ENCODE measurements at regions of chr5 and their contacts with region 1.

Region 1: GRCh38 chr5:119335261-119335677 is 20.6 kb upstream of the TNFAIP8 start:
- DNase-seq: no peak
- H3K27ac ChIP-seq: peak overlapping the region; percentile 63
- CTCF ChIP-seq: peak; percentile 14; the same call in 1 of the 2 replicates

Region 2: DNA sequence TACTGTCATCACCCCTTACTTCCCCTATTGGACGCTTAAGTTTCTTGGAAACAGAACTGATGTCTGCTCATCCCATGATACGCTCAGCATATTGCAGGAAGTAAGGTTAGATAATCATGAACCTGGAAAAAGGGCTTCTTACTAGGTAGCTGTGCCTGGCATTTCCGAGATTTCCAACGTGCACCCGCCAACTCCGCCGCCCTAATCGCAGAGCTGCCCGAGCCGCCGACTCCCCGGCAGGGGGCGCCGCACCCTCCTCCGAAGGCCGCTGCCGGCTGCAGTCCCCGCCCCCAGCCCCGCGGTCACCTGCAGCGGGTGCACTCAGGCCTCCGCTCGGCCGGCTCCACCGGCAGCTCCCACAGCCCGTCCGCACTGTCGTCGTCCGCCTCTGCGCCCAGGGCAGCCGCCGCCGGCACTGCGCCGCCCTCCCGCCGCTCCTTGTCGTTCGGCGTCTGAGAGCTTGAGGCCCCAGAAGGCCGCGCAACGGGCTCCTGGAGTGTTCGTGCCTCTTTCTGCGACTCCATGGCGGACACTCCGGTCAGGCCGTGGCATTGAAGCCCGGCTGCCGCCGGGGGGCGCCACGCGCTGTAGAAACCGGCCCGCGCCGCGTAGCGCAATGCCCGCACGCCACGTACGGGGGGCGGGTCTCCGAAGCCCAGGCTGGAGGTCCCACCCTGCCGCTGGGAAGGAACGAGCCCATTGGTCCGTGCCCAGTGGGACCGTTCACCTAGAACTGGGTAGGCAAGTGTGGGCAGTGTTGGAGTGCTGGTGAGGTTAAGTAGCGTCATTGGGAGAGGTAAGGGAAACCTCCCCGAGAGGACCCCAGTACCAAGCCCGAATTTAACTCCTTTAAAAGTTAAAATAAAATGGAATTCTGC is 347.0 kb before region 1 on chr5 and contains the start of gene DTWD2:
- CTCF ChIA-PET with region 1: interaction called, 16 read pairs
- POLR2A ChIA-PET with region 1: interaction called, 3 read pairs
- DNase-seq: peak; percentile 99
- H3K27ac ChIP-seq: peak within 1 kb of the TSS; percentile 92
- CTCF ChIP-seq: peak; percentile 99

Region 3: DNA sequence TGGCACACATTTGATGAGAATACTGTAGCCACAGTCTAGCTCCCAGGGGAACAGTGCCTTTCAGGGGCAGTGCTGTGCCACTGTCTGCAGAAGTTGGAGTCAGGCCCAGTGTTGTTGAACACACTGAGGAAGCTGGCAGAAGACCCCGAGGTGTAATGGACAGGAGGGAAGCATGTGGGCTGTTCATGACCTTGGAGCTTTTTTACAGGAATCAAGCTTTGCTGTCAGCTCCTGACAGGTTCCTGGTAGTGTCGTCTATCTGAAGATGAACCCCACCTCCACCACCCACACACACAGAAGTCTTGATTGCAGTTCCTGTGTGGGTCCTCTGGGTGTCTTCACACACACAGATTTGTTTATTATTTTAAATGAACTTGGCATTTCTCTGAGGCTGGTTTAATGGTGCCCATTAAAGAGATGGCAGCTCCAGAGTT is 19.7 kb before region 1 on chr5:
- CTCF ChIA-PET with region 1: interaction called, 13 read pairs
- POLR2A ChIA-PET with region 1: no interaction called
- DNase-seq: peak; percentile 67
- H3K27ac ChIP-seq: no peak overlapping the region
- CTCF ChIP-seq: peak; percentile 35; the same call in 1 of the 2 replicates